B cell (primary cell): ENCODE measurements at regions of chr1 and their contacts with region 1.

Region 1: GRCh38 chr1:223087291-223088255 is 55.5 kb downstream of the TLR5 start:
- DNase-seq: no peak
- ATAC-seq: no peak
- H3K4me3 ChIP-seq: no peak overlapping the region
- H3K4me3 Mint-ChIP-seq: no peak overlapping the region
- H3K27ac ChIP-seq: no peak overlapping the region
- H3K27ac Mint-ChIP-seq: no peak overlapping the region
- H3K4me1 ChIP-seq: peaks cover 0 to 3% of the 10 kb centered on the region in 2 donors
- H3K4me1 Mint-ChIP-seq: no peaks in the 10 kb centered on the region
- H3K27me3 ChIP-seq: no peaks in the 10 kb centered on the region
- H3K27me3 Mint-ChIP-seq: no peaks in the 10 kb centered on the region
- CTCF ChIP-seq: no peak

Region 2: GRCh38 chr1:222732216-222733159 is 355.1 kb before region 1 on chr1:
- CTCF ChIA-PET with region 1: interaction called, 21 read pairs
- POLR2A ChIA-PET with region 1: no interaction called
- intact Hi-C with region 1: no loop called
- DNase-seq: peak; percentile 84
- ATAC-seq: peak; percentile 82
- H3K4me3 ChIP-seq: peak overlapping the region in 3 of 5 experiments; percentile 13 to 45 (median 27)
- H3K4me3 Mint-ChIP-seq: peak overlapping the region; percentile 78
- H3K27ac ChIP-seq: peak overlapping the region; percentile 62 to 84
- H3K27ac Mint-ChIP-seq: peak overlapping the region; percentile 93
- H3K4me1 ChIP-seq: peaks cover 56 to 68% of the 10 kb centered on the region in 2 donors
- H3K4me1 Mint-ChIP-seq: peaks cover 56% of the 10 kb centered on the region
- H3K27me3 ChIP-seq: no peaks in the 10 kb centered on the region
- H3K27me3 Mint-ChIP-seq: no peaks in the 10 kb centered on the region
- CTCF ChIP-seq: no peak

Region 3: GRCh38 chr1:222786121-222786520 is 301.5 kb before region 1 on chr1:
- CTCF ChIA-PET with region 1: interaction called, 120 read pairs
- POLR2A ChIA-PET with region 1: no interaction called
- intact Hi-C with region 1: no loop called
- DNase-seq: no peak
- ATAC-seq: no peak
- H3K4me3 ChIP-seq: no peak overlapping the region
- H3K4me3 Mint-ChIP-seq: no peak overlapping the region
- H3K27ac ChIP-seq: no peak overlapping the region
- H3K27ac Mint-ChIP-seq: no peak overlapping the region
- H3K4me1 ChIP-seq: peaks cover 17 to 21% of the 10 kb centered on the region in 2 donors
- H3K4me1 Mint-ChIP-seq: peaks cover 60% of the 10 kb centered on the region
- H3K27me3 ChIP-seq: no peaks in the 10 kb centered on the region
- H3K27me3 Mint-ChIP-seq: no peaks in the 10 kb centered on the region
- CTCF ChIP-seq: no peak

Region 4: GRCh38 chr1:223097713-223098112 is 10.1 kb after region 1 on chr1:
- CTCF ChIA-PET with region 1: interaction called, 11 read pairs
- POLR2A ChIA-PET with region 1: no interaction called
- intact Hi-C with region 1: no loop called
- DNase-seq: no peak
- ATAC-seq: no peak
- H3K4me3 ChIP-seq: no peak overlapping the region
- H3K4me3 Mint-ChIP-seq: no peak overlapping the region
- H3K27ac ChIP-seq: no peak overlapping the region
- H3K27ac Mint-ChIP-seq: no peak overlapping the region
- H3K4me1 ChIP-seq: no peaks in the 10 kb centered on the region
- H3K4me1 Mint-ChIP-seq: no peaks in the 10 kb centered on the region
- H3K27me3 ChIP-seq: peaks cover 0 to 7% (median 1%) of the 10 kb centered on the region in 4 experiments
- H3K27me3 Mint-ChIP-seq: peaks cover 22% of the 10 kb centered on the region
- CTCF ChIP-seq: no peak